ENCODE measurements at regions of chr18 and their contacts with region 1.

Region 1: GRCh38 chr18:22800551-22800951 is 132.6 kb upstream of the RBBP8 start:
- DNase-seq: no peak
- H3K4me3 Mint-ChIP-seq: no peak overlapping the region
- H3K27ac Mint-ChIP-seq: no peak overlapping the region
- H3K4me1 Mint-ChIP-seq: peaks cover 8% of the 10 kb centered on the region
- H3K27me3 Mint-ChIP-seq: no peaks in the 10 kb centered on the region
- CTCF ChIP-seq: no peak

Region 2: GRCh38 chr18:22789600-22789999 is 11.0 kb before region 1 on chr18:
- CTCF ChIA-PET with region 1: interaction called, 10 read pairs
- POLR2A ChIA-PET with region 1: no interaction called
- intact Hi-C with region 1: no loop called
- DNase-seq: no peak
- H3K4me3 Mint-ChIP-seq: no peak overlapping the region
- H3K27ac Mint-ChIP-seq: no peak overlapping the region
- H3K4me1 Mint-ChIP-seq: no peaks in the 10 kb centered on the region
- H3K27me3 Mint-ChIP-seq: peaks cover 11% of the 10 kb centered on the region
- CTCF ChIP-seq: no peak

Region 3: GRCh38 chr18:22983175-22983574 is 182.6 kb after region 1 on chr18:
- CTCF ChIA-PET with region 1: interaction called, 32 read pairs
- POLR2A ChIA-PET with region 1: interaction called, 7 read pairs
- intact Hi-C with region 1: loop called (anchors 5 kb)
- DNase-seq: peak; percentile 48
- H3K4me3 Mint-ChIP-seq: no peak overlapping the region
- H3K27ac Mint-ChIP-seq: no peak overlapping the region
- H3K4me1 Mint-ChIP-seq: peaks cover 13% of the 10 kb centered on the region
- H3K27me3 Mint-ChIP-seq: no peaks in the 10 kb centered on the region
- CTCF ChIP-seq: peak; percentile 40